ENCODE measurements at regions of chr11 and their contacts with region 1.

Region 1: GRCh38 chr11:121464352-121464946 is 11.7 kb upstream of the SORL1-AS1 start:
- DNase-seq: peak; percentile 97
- ATAC-seq: peak; percentile 70
- H3K4me3 ChIP-seq: peak overlapping the region; percentile 43
- H3K27ac ChIP-seq: peak overlapping the region; percentile 93
- H3K4me1 ChIP-seq: peaks cover 76% of the 10 kb centered on the region
- H3K27me3 ChIP-seq: no peaks in the 10 kb centered on the region
- CTCF ChIP-seq: no peak

Region 2: GRCh38 chr11:121451986-121452608 is 12.4 kb before region 1 on chr11 and contains the start of gene SORL1:
- CTCF ChIA-PET with region 1: interaction called, 4 read pairs
- POLR2A ChIA-PET with region 1: interaction called, 6 read pairs
- intact Hi-C with region 1: loop called (anchors 1 kb)
- DNase-seq: peak; percentile 90
- ATAC-seq: peak; percentile 82
- H3K4me3 ChIP-seq: peak within 1 kb of the TSS; percentile 89
- H3K27ac ChIP-seq: peak within 1 kb of the TSS; percentile 65
- H3K4me1 ChIP-seq: peaks cover 39% of the 10 kb centered on the region
- H3K27me3 ChIP-seq: no peaks in the 10 kb centered on the region
- CTCF ChIP-seq: peak; percentile 68
- total RNA-seq, gene SORL1: 53.7 and 74.5 TPM in 2 replicates

Region 3: GRCh38 chr11:121476379-121477032 is 12.1 kb after region 1 on chr11:
- CTCF ChIA-PET with region 1: no interaction called
- POLR2A ChIA-PET with region 1: no interaction called
- intact Hi-C with region 1: loop called (anchors 1 kb)
- DNase-seq: peak; percentile 96
- ATAC-seq: peak; percentile 88
- H3K4me3 ChIP-seq: no peak overlapping the region
- H3K27ac ChIP-seq: peak overlapping the region; percentile 74
- H3K4me1 ChIP-seq: peaks cover 52% of the 10 kb centered on the region
- H3K27me3 ChIP-seq: no peaks in the 10 kb centered on the region
- CTCF ChIP-seq: no peak

Region 4: DNA sequence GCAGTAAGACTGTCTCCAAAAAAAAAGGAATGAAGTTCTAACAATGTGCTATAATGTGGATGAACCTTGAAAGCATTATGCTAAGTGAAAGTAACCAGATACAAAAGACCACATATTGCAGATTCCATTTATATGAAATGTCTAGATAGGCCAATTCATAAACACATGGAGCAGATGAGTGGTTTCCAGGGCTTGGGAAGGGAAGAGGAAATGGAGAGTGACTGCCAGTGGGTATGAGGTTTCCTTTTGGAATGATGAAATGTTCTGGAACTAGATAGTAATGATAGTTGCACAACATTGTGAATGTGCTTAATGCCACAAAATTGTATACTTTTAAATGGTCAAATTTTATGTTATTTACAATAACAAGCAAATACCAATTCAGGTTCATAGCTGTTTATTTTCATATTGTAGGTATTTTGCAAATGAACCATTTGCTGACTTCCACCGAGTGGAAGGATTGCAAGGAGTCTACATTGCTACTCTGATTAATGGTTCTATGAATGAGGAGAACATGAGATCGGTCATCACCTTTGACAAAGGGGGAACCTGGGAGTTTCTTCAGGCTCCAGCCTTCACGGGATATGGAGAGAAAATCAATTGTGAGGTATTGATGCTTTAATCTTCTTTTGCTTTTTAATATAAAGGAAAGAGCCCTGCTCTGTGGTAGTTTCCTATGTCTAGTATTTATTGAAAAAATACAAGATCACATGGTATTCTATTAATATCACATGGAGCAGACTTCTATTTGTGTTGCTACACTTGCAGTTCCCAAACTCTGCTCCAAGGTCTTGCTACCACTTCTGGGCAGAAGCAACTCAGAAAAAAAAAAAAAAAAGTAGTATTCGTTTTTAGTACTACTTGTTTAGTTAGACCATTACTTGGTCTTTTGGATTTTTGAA is 56.0 kb after region 1 on chr11:
- CTCF ChIA-PET with region 1: no interaction called
- POLR2A ChIA-PET with region 1: no interaction called
- intact Hi-C with region 1: loop called (anchors 5 kb)
- DNase-seq: peak; percentile 30
- ATAC-seq: no peak
- H3K4me3 ChIP-seq: no peak overlapping the region
- H3K27ac ChIP-seq: no peak overlapping the region
- H3K4me1 ChIP-seq: peaks cover 21% of the 10 kb centered on the region
- H3K27me3 ChIP-seq: no peaks in the 10 kb centered on the region
- CTCF ChIP-seq: no peak

Region 5: GRCh38 chr11:121634889-121635288 is 170.4 kb after region 1 on chr11:
- CTCF ChIA-PET with region 1: no interaction called
- POLR2A ChIA-PET with region 1: no interaction called
- intact Hi-C with region 1: no loop called
- DNase-seq: peak; percentile 97
- ATAC-seq: peak; percentile 92
- H3K4me3 ChIP-seq: peak overlapping the region; percentile 22; the same call in 1 of the 2 replicates
- H3K27ac ChIP-seq: peak overlapping the region; percentile 77
- H3K4me1 ChIP-seq: peaks cover 39% of the 10 kb centered on the region
- H3K27me3 ChIP-seq: no peaks in the 10 kb centered on the region
- CTCF ChIP-seq: no peak

Region 6: GRCh38 chr11:122120096-122120495 is 655.6 kb after region 1 on chr11:
- CTCF ChIA-PET with region 1: no interaction called
- POLR2A ChIA-PET with region 1: interaction called, 17 read pairs
- intact Hi-C with region 1: no loop called
- DNase-seq: no peak
- ATAC-seq: no peak
- H3K4me3 ChIP-seq: no peak overlapping the region
- H3K27ac ChIP-seq: no peak overlapping the region
- H3K4me1 ChIP-seq: peaks cover 16% of the 10 kb centered on the region
- H3K27me3 ChIP-seq: no peaks in the 10 kb centered on the region
- CTCF ChIP-seq: no peak

Region 7: DNA sequence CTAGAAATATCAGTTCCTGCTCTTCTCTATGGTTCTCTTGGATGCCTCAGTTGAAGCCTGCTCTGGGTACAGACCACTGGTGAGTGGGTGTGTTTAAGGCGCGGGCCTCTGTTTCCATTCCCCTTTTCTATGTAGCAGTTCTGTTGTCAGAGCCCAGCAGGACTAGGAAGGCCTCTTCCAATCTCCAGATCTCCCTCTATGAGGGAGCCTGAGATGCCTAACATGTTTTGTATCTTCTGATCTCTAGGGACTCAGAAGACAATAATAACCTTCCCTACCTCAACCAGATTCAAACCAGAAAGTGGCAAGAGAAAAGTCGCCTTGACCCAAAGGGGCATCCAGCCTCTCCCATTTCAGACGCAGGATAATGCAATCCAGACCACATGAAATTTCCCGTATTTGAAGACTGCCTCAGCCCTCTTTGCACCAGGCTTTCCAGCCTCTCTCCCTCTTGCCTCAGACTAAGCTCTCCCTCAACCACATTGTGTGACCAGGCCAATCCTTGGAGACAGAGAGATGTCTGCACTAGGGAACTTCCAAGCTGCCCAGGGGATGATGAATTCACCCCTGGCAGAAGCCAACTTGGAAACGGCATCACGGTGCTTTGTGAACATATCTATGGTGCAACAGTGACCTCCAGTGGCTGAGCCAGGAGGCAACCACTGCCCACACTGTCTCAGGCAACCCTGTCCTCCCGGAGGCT is 1041.0 kb after region 1 on chr11:
- CTCF ChIA-PET with region 1: interaction called, 11 read pairs
- POLR2A ChIA-PET with region 1: no interaction called
- intact Hi-C with region 1: loop called (anchors 10 kb)
- DNase-seq: peak; percentile 92
- ATAC-seq: peak; percentile 100
- H3K4me3 ChIP-seq: no peak overlapping the region
- H3K27ac ChIP-seq: no peak overlapping the region
- H3K4me1 ChIP-seq: no peaks in the 10 kb centered on the region
- H3K27me3 ChIP-seq: peaks cover 81% of the 10 kb centered on the region
- CTCF ChIP-seq: peak; percentile 95